ENCODE measurements at regions of chr1 and their contacts with region 1.

Region 1: GRCh38 chr1:186391841-186392240 is 16.2 kb downstream of the ODR4 start:
- DNase-seq: no peak
- H3K4me3 ChIP-seq: no peak overlapping the region
- H3K27ac ChIP-seq: no peak overlapping the region
- H3K4me1 ChIP-seq: no peaks in the 10 kb centered on the region
- H3K27me3 ChIP-seq: no peaks in the 10 kb centered on the region
- CTCF ChIP-seq: no peak
- EP300 ChIP-seq: no peak
- RAD21 ChIP-seq: no peak

Region 2: DNA sequence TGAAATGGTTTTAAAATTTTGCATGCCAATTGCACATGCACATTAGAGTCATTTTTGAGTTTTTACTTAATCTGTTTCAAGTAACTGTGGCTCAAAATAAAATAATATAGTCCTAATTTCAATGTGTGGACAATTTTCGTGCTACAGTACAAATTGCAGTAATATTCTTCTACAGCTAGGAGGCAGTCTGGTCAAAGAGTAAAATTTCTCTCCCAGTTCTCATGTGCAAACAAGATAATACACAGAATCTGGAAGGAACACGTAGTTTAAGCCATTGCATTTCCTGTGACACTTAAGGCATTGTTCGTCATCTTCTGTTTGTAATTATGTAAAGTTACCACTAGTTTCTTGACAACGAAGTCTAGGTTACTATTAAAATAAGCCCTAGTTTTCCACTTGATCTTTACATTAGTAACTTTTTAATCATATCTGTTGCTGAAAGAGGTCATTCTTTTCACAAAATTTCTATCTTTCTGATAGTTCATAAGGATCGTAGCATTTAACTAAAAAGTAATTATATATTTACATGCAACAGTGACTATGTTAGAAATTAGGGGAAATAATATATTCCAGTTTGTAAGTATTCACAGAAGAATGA is 12.7 kb after region 1 on chr1:
- CTCF ChIA-PET with region 1: interaction called, 10 read pairs
- POLR2A ChIA-PET with region 1: no interaction called
- DNase-seq: peak; percentile 32
- H3K4me3 ChIP-seq: no peak overlapping the region; a peak in 1 of 4 replicates
- H3K27ac ChIP-seq: no peak overlapping the region
- H3K4me1 ChIP-seq: peaks cover 0 to 4% of the 10 kb centered on the region in 2 experiments; a peak in 2 of 4 replicates
- H3K27me3 ChIP-seq: no peaks in the 10 kb centered on the region
- CTCF ChIP-seq: peak; percentile 84
- EP300 ChIP-seq: no peak
- RAD21 ChIP-seq: peak; percentile 68

Region 3: DNA sequence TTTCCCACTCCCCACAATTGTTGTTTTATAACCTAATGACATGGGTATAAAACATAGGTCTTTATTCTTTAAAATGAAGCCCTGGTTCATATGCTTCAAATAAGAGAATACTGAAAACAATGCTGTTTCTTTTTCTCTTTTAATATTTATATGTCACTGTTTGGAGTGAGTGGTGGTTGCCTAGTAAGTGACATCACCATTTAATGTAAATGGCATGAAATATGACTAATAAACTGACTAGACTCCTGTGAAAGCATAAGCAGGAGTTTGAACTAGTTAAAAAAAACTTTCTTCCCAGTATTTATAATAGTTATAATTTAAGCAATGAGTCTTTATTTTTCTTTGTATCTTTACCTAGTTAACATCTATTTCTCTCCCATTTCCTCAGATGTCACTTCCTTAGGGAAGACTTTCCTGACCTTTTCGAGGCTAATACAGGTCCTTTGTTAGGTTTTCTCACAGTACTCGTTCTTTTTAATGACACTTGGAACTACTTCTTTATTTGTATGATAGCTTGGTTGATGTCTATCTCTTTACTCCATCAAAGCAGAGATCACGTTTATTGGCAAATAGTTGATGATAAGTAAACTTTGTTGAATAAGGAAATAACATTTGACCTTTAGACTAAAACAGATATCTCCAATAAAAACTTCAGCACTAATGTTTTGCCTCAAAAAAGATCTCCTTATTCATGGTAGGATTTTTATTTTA is 174.5 kb after region 1 on chr1:
- CTCF ChIA-PET with region 1: no interaction called
- POLR2A ChIA-PET with region 1: no interaction called
- DNase-seq: no peak
- H3K4me3 ChIP-seq: no peak overlapping the region
- H3K27ac ChIP-seq: peak overlapping the region in 1 of 2 experiments; percentile 89; a peak in 2 of 4 replicates
- H3K4me1 ChIP-seq: peaks cover 0 to 15% of the 10 kb centered on the region in 2 experiments; a peak in 2 of 4 replicates
- H3K27me3 ChIP-seq: no peaks in the 10 kb centered on the region
- CTCF ChIP-seq: no peak
- EP300 ChIP-seq: no peak
- RAD21 ChIP-seq: no peak